OCI-LY7 (cell line): ENCODE measurements at regions of chr4 and their contacts with region 1.

Region 1: GRCh38 chr4:80931631-80932081 is 98.9 kb upstream of the BMP3 start:
- DNase-seq: no peak
- H3K4me3 ChIP-seq: no peak overlapping the region
- H3K27ac ChIP-seq: no peak overlapping the region
- H3K4me1 ChIP-seq: peaks cover 7% of the 10 kb centered on the region
- CTCF ChIP-seq: no peak

Region 2: GRCh38 chr4:80948141-80948540 is 16.5 kb after region 1 on chr4:
- CTCF ChIA-PET with region 1: interaction called, 4 read pairs
- POLR2A ChIA-PET with region 1: interaction called, 20 read pairs
- intact Hi-C with region 1: no loop called
- DNase-seq: no peak
- H3K4me3 ChIP-seq: no peak overlapping the region
- H3K27ac ChIP-seq: no peak overlapping the region
- H3K4me1 ChIP-seq: peaks cover 18% of the 10 kb centered on the region
- CTCF ChIP-seq: no peak

Region 3: GRCh38 chr4:80967346-80967745 is 35.7 kb after region 1 on chr4:
- CTCF ChIA-PET with region 1: no interaction called
- POLR2A ChIA-PET with region 1: interaction called, 11 read pairs
- intact Hi-C with region 1: no loop called
- DNase-seq: no peak
- H3K4me3 ChIP-seq: no peak overlapping the region
- H3K27ac ChIP-seq: no peak overlapping the region
- H3K4me1 ChIP-seq: no peaks in the 10 kb centered on the region
- CTCF ChIP-seq: no peak

Region 4: GRCh38 chr4:81429607-81430006 is 498.0 kb after region 1 on chr4:
- CTCF ChIA-PET with region 1: no interaction called
- POLR2A ChIA-PET with region 1: no interaction called
- intact Hi-C with region 1: no loop called
- DNase-seq: no peak
- H3K4me3 ChIP-seq: no peak overlapping the region
- H3K27ac ChIP-seq: no peak overlapping the region
- H3K4me1 ChIP-seq: no peaks in the 10 kb centered on the region
- CTCF ChIP-seq: no peak